Stomach (tissue), 19 donors: ENCODE measurements at regions of chr22 and their contacts with region 1.

Region 1: GRCh38 chr22:32469797-32470212 is 4.8 kb upstream of the FBXO7 start:
- DNase-seq: peak in 1 of 2 donors; percentile 51
- H3K4me3 ChIP-seq: no peak overlapping the region
- H3K27ac ChIP-seq: no peak overlapping the region
- H3K4me1 ChIP-seq: peaks cover 8 to 21% (median 13%) of the 10 kb centered on the region in 4 donors
- H3K27me3 ChIP-seq: peaks cover 0 to 22% (median 0%) of the 10 kb centered on the region in 3 donors
- CTCF ChIP-seq: no peak
- EP300 ChIP-seq: no peak
- POLR2A ChIP-seq: no peak

Region 2: GRCh38 chr22:32375678-32376450 is 93.9 kb before region 1 on chr22:
- intact Hi-C with region 1: no loop called
- DNase-seq: no peak
- H3K4me3 ChIP-seq: no peak overlapping the region
- H3K27ac ChIP-seq: no peak overlapping the region
- H3K4me1 ChIP-seq: no peaks in the 10 kb centered on the region
- H3K27me3 ChIP-seq: no peaks in the 10 kb centered on the region
- CTCF ChIP-seq: no peak
- EP300 ChIP-seq: no peak
- POLR2A ChIP-seq: no peak

Region 3: GRCh38 chr22:32396746-32397145 is 73.1 kb before region 1 on chr22:
- intact Hi-C with region 1: no loop called
- DNase-seq: no peak
- H3K4me3 ChIP-seq: no peak overlapping the region
- H3K27ac ChIP-seq: no peak overlapping the region
- H3K4me1 ChIP-seq: no peaks in the 10 kb centered on the region
- H3K27me3 ChIP-seq: no peaks in the 10 kb centered on the region
- CTCF ChIP-seq: no peak
- EP300 ChIP-seq: no peak
- POLR2A ChIP-seq: no peak

Region 4: DNA sequence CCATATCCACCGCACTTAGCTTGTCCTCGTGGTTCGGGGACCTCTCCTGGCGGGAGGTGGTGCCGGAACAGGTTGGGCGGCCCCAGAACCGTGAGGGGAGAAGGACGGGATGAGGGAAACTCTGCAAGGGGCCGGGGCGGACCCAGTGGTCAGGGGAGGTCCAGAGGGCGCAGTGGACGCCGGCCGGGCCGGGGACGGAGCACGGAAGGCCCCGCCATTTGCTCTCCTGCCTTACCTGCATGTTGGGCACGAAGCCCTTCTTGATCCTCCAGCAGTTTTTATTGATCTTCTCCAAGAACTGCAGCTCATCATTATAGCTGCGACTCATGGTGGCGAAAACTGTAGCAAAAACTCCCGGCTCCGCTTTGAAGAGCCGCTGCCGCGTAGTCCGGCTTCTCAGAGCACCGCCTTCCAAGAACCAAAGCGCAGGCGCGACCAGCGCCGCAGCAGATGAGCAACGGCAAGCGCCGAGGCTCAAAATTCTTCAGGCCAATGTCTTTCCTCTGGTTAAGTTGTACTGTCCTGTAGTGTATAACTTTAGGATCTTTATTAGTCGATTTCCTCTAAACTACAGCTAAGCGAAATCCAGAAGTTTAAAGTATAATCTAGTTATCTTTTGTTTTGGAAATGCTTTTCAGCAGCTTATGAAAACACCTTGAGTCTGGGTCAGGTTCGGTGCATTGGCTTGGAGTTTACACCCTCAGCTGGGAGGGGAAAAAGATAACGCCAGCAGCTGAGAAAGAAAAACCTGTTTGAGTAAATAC is 57.8 kb before region 1 on chr22 and contains the start of gene RTCB:
- intact Hi-C with region 1: loop called (anchors 10 kb)
- DNase-seq: peak; percentile 89 to 97
- H3K4me3 ChIP-seq: peak within 1 kb of the TSS; percentile 68 to 93 (median 89)
- H3K27ac ChIP-seq: peak within 1 kb of the TSS; percentile 73 to 88 (median 86)
- H3K4me1 ChIP-seq: peaks cover 16 to 44% (median 34%) of the 10 kb centered on the region in 4 donors
- H3K27me3 ChIP-seq: no peaks in the 10 kb centered on the region
- CTCF ChIP-seq: no peak
- EP300 ChIP-seq: peak; percentile 7
- POLR2A ChIP-seq: peak in 1 of 4 donors; percentile 9
- total RNA-seq, gene RTCB: 51.6 to 131 (median 106) TPM

Region 5: GRCh38 chr22:32781695-32782094 is 311.9 kb after region 1 on chr22:
- intact Hi-C with region 1: no loop called
- DNase-seq: no peak
- H3K4me3 ChIP-seq: no peak overlapping the region
- H3K27ac ChIP-seq: peak overlapping the region in 2 of 5 donors; percentile 6 to 46
- H3K4me1 ChIP-seq: peaks cover 0 to 15% (median 0%) of the 10 kb centered on the region in 4 donors
- H3K27me3 ChIP-seq: no peaks in the 10 kb centered on the region
- CTCF ChIP-seq: no peak
- EP300 ChIP-seq: no peak
- POLR2A ChIP-seq: no peak